Activated CD4-positive, alpha-beta memory T cell treated with anti-CD3 and anti-CD28 coated beads, Interleukin-2, amount 10 ng/mL, durations not matched to agents 7 days and 5 days (primary cell): ENCODE measurements at regions of chr21 and their contacts with region 1.

Region 1: DNA sequence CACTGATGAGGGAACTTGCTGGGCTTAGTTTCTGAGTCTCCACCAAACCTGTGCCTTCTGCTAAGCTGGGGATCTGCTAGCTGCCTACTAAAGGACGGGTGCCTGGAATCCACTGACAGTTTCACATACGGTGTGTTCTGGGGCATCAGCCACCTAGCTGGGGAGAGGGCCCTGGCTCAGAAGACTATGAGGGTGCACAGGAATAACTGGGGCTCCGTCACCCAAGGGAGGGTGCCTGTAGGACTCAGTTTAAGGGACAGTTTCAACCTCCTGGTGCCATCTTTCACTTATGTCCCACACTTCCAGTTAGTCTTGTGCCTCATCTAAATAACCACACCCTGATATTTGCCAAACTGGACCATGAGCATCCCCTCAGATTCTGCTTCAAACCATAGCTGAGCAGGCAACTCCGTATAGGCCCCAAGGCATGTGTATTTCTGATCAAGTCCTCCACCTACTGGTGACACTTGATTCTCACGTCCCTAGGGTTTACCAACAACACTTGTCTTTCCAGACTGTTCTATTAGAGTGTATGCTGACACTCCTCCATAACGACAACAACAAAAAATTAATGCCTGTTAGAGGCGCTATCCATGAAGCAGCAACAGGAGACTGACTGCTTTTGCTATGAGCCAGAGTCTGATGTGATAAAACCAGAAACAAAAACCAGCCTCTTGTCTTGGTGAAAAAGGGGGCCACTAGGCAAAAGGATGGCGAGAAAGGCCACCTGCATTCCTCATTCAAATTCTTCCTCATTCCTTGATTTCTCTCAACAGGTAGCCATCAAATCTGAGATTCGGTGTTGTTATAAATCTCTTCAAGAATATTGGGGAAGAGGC is 55.0 kb upstream of the PAXBP1 start:
- DNase-seq: peak; percentile 41
- H3K4me3 Mint-ChIP-seq: no peak overlapping the region
- H3K27ac Mint-ChIP-seq: no peak overlapping the region
- H3K4me1 Mint-ChIP-seq: no peaks in the 10 kb centered on the region
- H3K27me3 Mint-ChIP-seq: peaks cover 9% of the 10 kb centered on the region

Region 2: DNA sequence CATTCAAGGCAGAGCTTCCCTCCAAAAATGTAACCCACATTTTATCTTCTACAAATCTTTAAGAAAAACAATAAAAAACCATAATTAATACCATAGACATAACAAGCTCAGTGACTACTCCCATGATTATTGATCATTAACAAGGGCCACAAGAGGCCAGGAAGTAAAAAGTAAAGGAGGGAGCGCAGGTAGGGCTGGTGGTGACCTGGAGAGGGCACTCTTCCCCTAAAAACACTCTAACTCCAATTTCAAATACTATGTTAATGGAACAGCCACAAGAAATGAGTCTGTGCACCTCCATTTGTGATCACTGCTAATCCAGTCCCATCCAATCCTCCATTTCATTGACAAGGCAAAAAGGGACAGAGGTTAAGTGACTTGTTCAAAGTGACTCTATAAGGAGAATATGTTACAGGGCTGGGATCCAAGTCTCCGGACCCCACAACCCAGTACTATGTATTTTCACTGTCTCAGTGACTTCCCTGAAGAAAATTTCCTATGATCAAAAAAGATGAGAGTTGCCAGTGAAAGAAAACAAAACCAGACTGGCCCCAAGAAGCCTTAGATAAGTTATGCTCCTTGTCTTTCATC is 173.1 kb before region 1 on chr21:
- CTCF ChIA-PET with region 1: interaction called, 17 read pairs
- POLR2A ChIA-PET with region 1: no interaction called
- DNase-seq: peak; percentile 38
- H3K4me3 Mint-ChIP-seq: no peak overlapping the region
- H3K27ac Mint-ChIP-seq: no peak overlapping the region
- H3K4me1 Mint-ChIP-seq: peaks cover 3% of the 10 kb centered on the region
- H3K27me3 Mint-ChIP-seq: no peaks in the 10 kb centered on the region